GM12878 (cell line): ENCODE measurements at regions of chr5 and their contacts with region 1.

Region 1: DNA sequence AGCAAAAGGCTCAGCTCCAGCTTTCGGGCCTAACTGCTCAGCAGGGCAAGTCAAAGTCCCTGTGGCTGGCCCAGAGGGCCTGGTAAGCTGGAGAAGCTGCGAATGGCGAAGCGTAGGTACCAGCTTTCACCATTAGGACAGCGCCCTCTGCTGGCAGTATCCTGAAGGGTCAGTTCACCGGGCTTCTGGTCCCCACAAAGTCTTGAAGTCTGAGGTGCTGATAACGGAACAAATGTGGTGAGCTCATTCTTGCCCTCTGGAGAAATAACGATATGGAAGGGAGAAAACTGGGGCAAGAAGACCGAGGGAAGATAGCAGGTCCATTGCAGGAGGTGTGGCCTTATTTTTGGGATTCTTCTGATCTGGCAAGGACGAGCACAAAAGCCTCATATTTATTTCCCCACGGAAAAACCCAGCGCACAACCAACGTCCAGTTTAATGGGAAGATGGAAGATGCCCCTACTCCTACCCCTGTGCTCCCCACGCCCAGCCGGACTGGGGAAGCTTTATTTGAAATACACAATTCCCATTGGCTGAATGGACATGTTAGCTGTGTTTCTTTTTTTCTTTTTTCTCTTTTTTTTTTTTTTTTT is 7.2 kb downstream of the SOWAHA start:
- DNase-seq: peak; percentile 65
- ATAC-seq: peak; percentile 97
- H3K4me3 ChIP-seq: no peak overlapping the region
- H3K27ac ChIP-seq: no peak overlapping the region
- H3K4me1 ChIP-seq: no peaks in the 10 kb centered on the region; the same call in 1 of the 2 replicates
- H3K27me3 ChIP-seq: no peaks in the 10 kb centered on the region; a peak in 2 of 4 replicates
- CTCF ChIP-seq: peak; percentile 89 to 94 (median 89)
- EP300 ChIP-seq: no peak
- POLR2A ChIP-seq: no peak
- RAD21 ChIP-seq: peak; percentile 87

Region 2: DNA sequence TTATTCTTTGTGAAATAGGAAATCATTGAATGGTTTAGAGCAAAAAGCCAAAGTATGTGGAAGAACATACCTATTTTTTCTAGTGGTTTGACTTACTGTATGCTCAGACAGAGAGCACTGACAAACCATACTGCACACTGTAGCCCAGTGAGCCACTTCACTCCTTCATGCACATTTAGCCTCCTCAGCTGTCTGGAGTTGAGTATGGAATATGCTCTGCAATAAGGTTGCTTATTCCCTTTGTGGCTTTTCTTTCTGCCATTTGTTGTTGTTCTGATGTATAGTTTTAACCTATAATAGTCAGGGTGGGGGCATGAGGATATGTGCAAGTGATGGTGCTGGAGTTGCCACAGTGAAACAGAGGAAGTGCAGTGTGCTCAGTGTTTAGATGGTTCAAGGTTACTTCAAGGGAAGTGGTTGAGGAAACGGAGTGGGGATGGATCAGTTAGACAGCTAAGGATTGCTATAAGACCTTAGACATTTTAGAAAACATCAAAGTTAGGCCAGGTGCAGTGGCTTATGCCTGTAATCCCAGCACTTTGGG is 1455.7 kb before region 1 on chr5:
- CTCF ChIA-PET with region 1: no interaction called
- POLR2A ChIA-PET with region 1: no interaction called
- RAD21 ChIA-PET with region 1: no interaction called
- SMC1A ChIA-PET with region 1: no interaction called
- in situ Hi-C with region 1: no loop called
- intact Hi-C with region 1: no loop called
- DNase-seq: no peak
- ATAC-seq: no peak
- H3K4me3 ChIP-seq: no peak overlapping the region
- H3K27ac ChIP-seq: no peak overlapping the region
- H3K4me1 ChIP-seq: no peaks in the 10 kb centered on the region
- H3K27me3 ChIP-seq: no peaks in the 10 kb centered on the region
- CTCF ChIP-seq: no peak
- EP300 ChIP-seq: no peak
- POLR2A ChIP-seq: no peak
- RAD21 ChIP-seq: no peak

Region 3: DNA sequence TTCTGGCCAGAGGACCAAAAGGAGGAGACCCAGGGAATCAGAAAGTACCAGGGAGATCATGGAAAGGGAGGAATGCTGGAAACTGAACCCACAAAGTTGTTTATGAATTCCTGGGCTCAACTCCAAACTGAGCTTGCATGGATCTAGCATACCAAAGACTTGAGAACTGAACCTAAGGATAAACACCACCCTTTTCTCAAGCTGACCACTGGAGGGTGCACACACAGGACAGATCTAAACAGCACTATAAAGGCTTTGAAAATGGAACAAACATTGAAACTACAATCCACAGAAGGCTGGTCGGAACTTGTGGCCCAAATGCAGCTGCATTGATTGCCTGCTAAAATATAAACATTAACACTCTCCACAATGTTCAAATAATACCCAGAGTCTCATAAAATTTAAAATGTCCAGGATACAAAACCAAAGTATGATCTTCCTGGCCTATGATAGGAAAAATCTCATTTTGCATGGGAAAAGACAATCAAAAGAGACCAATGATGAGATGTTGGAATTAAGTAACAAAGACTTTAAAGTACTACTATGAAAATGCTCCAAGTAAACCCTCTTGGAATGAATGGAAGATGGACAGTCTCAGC is 314.1 kb before region 1 on chr5:
- CTCF ChIA-PET with region 1: interaction called, 65 read pairs
- POLR2A ChIA-PET with region 1: no interaction called
- RAD21 ChIA-PET with region 1: interaction called, 40 read pairs
- SMC1A ChIA-PET with region 1: interaction called, 24 read pairs
- in situ Hi-C with region 1: no loop called
- intact Hi-C with region 1: loop called (anchors 2 kb)
- DNase-seq: no peak
- ATAC-seq: peak; percentile 89
- H3K4me3 ChIP-seq: no peak overlapping the region
- H3K27ac ChIP-seq: no peak overlapping the region
- H3K4me1 ChIP-seq: peaks cover 14% of the 10 kb centered on the region
- H3K27me3 ChIP-seq: no peaks in the 10 kb centered on the region
- CTCF ChIP-seq: peak; percentile 69 to 77 (median 74)
- EP300 ChIP-seq: no peak
- POLR2A ChIP-seq: no peak
- RAD21 ChIP-seq: peak; percentile 81

Region 4: GRCh38 chr5:132639706-132640130 is 180.5 kb before region 1 on chr5:
- CTCF ChIA-PET with region 1: interaction called, 13 read pairs
- POLR2A ChIA-PET with region 1: no interaction called
- RAD21 ChIA-PET with region 1: interaction called, 6 read pairs
- SMC1A ChIA-PET with region 1: interaction called, 10 read pairs
- in situ Hi-C with region 1: no loop called
- intact Hi-C with region 1: no loop called
- DNase-seq: peak; percentile 82
- ATAC-seq: peak; percentile 78
- H3K4me3 ChIP-seq: no peak overlapping the region
- H3K27ac ChIP-seq: peak overlapping the region; percentile 28
- H3K4me1 ChIP-seq: peaks cover 59% of the 10 kb centered on the region
- H3K27me3 ChIP-seq: no peaks in the 10 kb centered on the region
- CTCF ChIP-seq: no peak
- EP300 ChIP-seq: peak in 1 of 2 experiments; percentile 70; a peak in 2 of 4 replicates
- POLR2A ChIP-seq: no peak
- RAD21 ChIP-seq: no peak

Region 5: DNA sequence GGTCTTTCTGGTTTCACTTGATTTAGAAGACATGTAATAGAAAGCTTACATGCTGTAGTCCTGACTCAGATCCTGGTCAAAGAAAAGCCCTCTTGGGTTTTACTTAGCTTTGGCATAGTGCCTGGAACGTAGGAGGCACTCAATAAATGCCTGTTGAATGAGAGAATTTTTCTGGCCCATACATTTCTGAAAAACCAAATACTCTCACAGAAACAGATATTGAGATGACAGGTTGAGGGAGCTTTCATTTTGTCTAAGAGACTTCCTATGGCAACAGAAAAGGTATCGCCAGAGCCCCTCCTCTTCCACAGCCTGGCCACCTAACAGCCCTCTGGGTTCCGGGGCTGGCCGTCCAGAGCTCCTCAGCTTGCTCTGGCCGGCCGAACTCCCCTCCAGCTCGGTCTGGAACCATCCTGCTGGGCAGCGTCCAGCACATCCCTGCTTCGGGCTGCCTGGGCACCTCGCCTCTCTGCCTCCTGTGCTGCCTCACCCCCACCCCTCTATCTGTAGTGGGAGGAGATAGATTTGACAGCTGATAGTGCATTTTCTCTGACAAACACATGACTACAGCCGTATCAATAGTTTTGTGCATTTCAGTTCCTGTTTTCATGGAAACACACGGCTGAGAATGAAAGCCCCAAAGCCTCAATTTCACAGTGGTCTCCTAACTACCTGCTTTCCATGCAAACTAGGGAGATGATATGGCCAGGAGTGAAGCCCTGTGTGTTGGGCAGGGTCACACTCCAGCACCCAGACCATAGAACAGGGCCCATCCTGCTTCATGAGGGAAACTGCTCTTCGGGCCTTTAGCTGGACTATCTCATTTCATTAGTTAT is 145.4 kb before region 1 on chr5:
- CTCF ChIA-PET with region 1: interaction called, 6 read pairs
- POLR2A ChIA-PET with region 1: no interaction called
- RAD21 ChIA-PET with region 1: interaction called, 13 read pairs
- SMC1A ChIA-PET with region 1: interaction called, 6 read pairs
- in situ Hi-C with region 1: no loop called
- intact Hi-C with region 1: no loop called
- DNase-seq: peak; percentile 93
- ATAC-seq: peak; percentile 88
- H3K4me3 ChIP-seq: peak overlapping the region; percentile 29; the same call in 1 of the 2 replicates
- H3K27ac ChIP-seq: peak overlapping the region; percentile 75
- H3K4me1 ChIP-seq: peaks cover 33% of the 10 kb centered on the region
- H3K27me3 ChIP-seq: no peaks in the 10 kb centered on the region
- CTCF ChIP-seq: no peak
- EP300 ChIP-seq: peak; percentile 92 to 96
- POLR2A ChIP-seq: peak; percentile 33; the same call in 1 of the 2 replicates
- RAD21 ChIP-seq: no peak

Region 6: DNA sequence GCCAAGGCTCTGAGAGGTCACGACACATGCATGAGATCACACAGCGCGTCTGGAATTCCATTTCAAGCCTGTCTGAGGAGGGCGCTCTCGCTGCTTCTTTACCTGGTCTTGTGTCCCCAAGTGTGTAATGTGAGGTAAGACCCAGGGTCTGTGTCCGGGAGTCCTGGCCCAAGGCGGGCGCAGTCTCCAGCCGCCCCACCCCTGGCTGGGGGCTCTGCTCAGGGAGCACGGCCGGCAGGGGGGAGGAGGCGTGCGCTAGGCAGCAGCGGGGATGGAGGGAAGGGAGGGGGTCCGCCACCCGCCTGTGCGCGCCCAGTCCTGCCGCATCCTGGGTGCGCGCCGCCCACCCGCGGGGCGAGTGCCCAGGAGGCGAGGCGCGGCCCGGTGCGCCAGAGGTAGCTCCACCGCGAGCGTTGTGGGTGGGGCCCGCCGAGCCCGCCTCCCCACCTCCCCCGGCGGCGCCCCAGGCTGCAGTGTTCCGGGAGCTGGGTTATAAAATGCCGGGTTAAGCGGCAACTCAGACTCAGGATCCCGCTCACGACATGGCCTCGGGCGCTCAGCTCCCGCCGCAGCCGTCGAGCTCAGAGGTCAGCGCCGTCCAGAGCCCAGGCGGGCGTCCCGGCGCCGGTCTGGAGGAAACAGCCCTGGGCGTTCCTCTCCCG is 73.2 kb before region 1 on chr5 and contains the start of gene CCNI2:
- CTCF ChIA-PET with region 1: interaction called, 136 read pairs
- POLR2A ChIA-PET with region 1: interaction called, 11 read pairs
- RAD21 ChIA-PET with region 1: interaction called, 30 read pairs
- SMC1A ChIA-PET with region 1: interaction called, 129 read pairs
- in situ Hi-C with region 1: no loop called
- intact Hi-C with region 1: loop called (anchors 2 kb)
- DNase-seq: no peak
- ATAC-seq: peak; percentile 71
- H3K4me3 ChIP-seq: peak within 1 kb of the TSS; percentile 72
- H3K27ac ChIP-seq: no peak within 1 kb of the TSS
- H3K4me1 ChIP-seq: peaks cover 23% of the 10 kb centered on the region
- H3K27me3 ChIP-seq: no peaks in the 10 kb centered on the region
- CTCF ChIP-seq: peak; percentile 47 to 56 (median 53)
- EP300 ChIP-seq: no peak
- POLR2A ChIP-seq: peak; percentile 67
- RAD21 ChIP-seq: peak; percentile 20; the same call in 1 of the 2 replicates
- polyA plus RNA-seq, gene CCNI2: 3.1 to 8.0 TPM

Region 7: GRCh38 chr5:132797651-132798050 is 22.6 kb before region 1 on chr5:
- CTCF ChIA-PET with region 1: interaction called, 31 read pairs
- POLR2A ChIA-PET with region 1: interaction called, 6 read pairs
- RAD21 ChIA-PET with region 1: interaction called, 27 read pairs
- SMC1A ChIA-PET with region 1: interaction called, 9 read pairs
- in situ Hi-C with region 1: no loop called
- intact Hi-C with region 1: no loop called
- DNase-seq: no peak
- ATAC-seq: no peak
- H3K4me3 ChIP-seq: no peak overlapping the region
- H3K27ac ChIP-seq: no peak overlapping the region
- H3K4me1 ChIP-seq: no peaks in the 10 kb centered on the region
- H3K27me3 ChIP-seq: no peaks in the 10 kb centered on the region
- CTCF ChIP-seq: no peak
- EP300 ChIP-seq: no peak
- POLR2A ChIP-seq: no peak
- RAD21 ChIP-seq: no peak